ENCODE measurements at regions of chr21 and their contacts with region 1.

Region 1: GRCh38 chr21:23356905-23357304 is 2250.4 kb downstream of the MRPL39 start:
- DNase-seq: no peak
- H3K4me3 ChIP-seq: no peak overlapping the region
- H3K27ac ChIP-seq: no peak overlapping the region
- H3K4me1 ChIP-seq: no peaks in the 10 kb centered on the region
- CTCF ChIP-seq: no peak

Region 2: DNA sequence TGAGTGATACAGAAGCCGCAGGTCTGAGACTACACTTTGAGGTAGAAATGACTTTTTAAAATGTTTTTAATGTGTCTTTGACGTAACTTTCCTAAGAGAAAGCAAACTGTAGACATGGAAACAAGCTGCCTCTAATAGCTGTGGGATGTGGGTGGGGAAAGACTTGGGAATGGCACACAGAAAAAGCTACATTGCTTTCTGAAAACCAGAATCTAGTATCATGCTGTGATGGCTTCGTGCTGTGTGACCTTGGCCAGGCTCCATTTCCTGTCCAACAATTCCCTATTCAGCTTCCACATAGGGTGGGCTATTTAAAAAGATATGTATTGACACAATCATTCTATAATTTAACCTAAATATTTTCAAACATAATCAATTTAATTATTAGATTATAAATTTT is 1449.6 kb before region 1 on chr21:
- CTCF ChIA-PET with region 1: no interaction called
- POLR2A ChIA-PET with region 1: interaction called, 13 read pairs
- intact Hi-C with region 1: no loop called
- DNase-seq: no peak
- H3K4me3 ChIP-seq: no peak overlapping the region
- H3K27ac ChIP-seq: no peak overlapping the region
- H3K4me1 ChIP-seq: no peaks in the 10 kb centered on the region
- CTCF ChIP-seq: no peak

Region 3: DNA sequence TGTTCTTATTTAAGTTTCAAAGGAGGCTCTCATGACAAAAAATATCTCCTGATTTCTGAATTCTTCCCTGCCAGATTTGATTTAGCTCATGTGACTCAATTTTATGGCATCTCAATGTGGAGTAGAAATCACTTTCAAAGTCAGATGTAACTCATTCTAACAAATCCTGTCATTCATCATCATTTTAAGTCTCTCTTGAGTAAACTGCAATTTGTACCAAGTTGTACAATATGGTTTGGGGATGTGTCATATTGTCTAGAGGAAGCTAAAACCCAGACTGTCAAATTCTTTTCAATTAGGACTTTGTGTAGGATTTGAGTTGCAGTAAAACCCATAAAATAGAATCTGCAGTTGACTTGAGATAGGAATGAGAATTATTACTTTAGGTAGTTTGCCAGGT is 257.7 kb before region 1 on chr21:
- CTCF ChIA-PET with region 1: no interaction called
- POLR2A ChIA-PET with region 1: no interaction called
- intact Hi-C with region 1: no loop called
- DNase-seq: no peak
- H3K4me3 ChIP-seq: no peak overlapping the region
- H3K27ac ChIP-seq: no peak overlapping the region
- H3K4me1 ChIP-seq: no peaks in the 10 kb centered on the region
- CTCF ChIP-seq: no peak

Measured in OCI-LY7 (cell line).